Astrocyte of the cerebellum (primary cell): ENCODE measurements at regions of chr1 and their contacts with region 1.

Region 1: DNA sequence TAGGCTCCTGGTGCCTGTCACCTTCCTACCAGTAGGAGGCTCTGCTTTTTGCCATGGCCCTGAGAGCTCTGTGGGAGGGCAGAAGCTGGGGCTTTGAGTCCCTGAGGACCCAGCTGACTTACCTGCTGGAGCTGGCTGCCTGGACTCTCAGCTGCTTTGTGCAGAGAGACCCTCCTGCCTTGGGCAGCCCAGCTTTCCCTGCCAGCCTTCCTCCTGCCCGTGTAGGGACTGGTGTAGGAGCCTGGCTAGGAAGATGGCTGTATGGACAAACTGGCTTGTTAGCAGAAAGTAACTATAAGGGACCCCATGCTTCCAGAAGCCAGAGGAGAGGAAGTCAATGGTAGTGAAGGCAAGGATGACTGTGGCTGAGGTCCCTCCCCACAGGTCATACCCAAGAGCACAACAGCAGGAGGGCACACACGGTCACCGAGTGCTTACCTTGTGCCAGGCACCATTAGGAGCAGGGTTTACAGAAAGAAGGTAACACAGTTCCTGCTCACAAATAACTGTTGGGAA is 9.7 kb upstream of the CELSR2 start:
- DNase-seq: no peak
- H3K4me3 ChIP-seq: no peak overlapping the region
- CTCF ChIP-seq: peak; percentile 71

Region 2: GRCh38 chr1:109201123-109201703 is 38.4 kb before region 1 on chr1:
- in situ Hi-C with region 1: loop called (anchors 5 kb)
- DNase-seq: peak; percentile 38
- H3K4me3 ChIP-seq: no peak overlapping the region
- CTCF ChIP-seq: peak; percentile 80